ENCODE measurements at regions of chr6 and their contacts with region 1.

Region 1: DNA sequence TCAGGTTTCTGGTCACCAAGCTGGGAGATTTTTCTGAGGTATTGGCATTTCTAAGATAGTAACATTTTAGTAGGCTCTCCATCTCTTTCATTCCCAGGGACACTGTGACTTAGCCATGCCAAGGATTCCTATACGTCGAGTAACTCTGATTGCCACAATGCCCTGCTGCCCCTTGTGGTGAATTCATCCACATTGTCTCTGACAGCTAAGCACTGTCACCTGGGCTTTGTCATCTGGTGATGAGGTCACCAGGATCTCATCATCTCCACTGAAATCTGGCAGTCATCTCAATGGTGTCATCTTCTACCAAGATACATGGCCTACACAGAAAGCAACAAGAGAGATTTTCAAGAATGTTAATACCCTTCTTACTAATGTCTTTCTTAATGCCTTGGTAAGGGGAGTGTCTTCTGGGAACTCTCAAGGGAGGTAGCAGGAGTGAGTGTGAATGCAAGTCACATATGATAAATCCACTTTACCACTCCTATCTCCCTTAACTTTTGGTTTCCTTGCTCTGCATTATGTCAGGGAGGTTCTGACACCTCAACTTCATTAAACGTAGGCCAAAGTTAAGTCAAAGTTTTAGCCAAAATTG is 246.7 kb downstream of the CD109 start:
- DNase-seq: peak; percentile 59
- ATAC-seq: peak; percentile 100
- H3K4me3 ChIP-seq: no peak overlapping the region
- H3K27ac ChIP-seq: no peak overlapping the region
- H3K4me1 ChIP-seq: peaks cover 0 to 8% of the 10 kb centered on the region in 2 experiments; a peak in 1 of 4 replicates
- H3K27me3 ChIP-seq: no peaks in the 10 kb centered on the region
- CTCF ChIP-seq: peak; percentile 12 to 66 (median 61); a peak in 4 of 6 replicates
- POLR2A ChIP-seq: no peak
- RAD21 ChIP-seq: peak; percentile 45

Region 2: DNA sequence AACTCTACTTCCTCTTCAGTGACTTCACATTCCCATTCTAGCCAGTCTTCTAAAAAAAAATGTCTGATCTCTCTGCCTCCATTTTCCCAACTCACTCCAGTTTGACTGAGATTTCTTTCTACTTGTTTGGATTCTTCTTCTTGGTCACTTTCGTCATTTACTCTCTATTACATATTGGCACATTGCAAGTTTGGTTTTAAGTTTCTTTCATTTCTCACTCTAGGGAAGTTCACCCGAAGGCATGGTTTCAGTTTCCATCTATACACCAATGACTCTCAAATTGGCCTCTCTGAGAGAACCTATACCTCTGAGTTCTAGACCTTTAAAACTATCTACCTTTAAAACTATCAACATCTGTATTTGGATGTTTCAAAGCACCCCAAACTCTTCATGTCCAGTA is 195.4 kb before region 1 on chr6:
- CTCF ChIA-PET with region 1: no interaction called
- POLR2A ChIA-PET with region 1: no interaction called
- RAD21 ChIA-PET with region 1: no interaction called
- intact Hi-C with region 1: loop called (anchors 10 kb)
- DNase-seq: no peak
- ATAC-seq: no peak
- H3K4me3 ChIP-seq: no peak overlapping the region
- H3K27ac ChIP-seq: no peak overlapping the region
- H3K4me1 ChIP-seq: peaks cover 6 to 24% of the 10 kb centered on the region in 2 experiments
- H3K27me3 ChIP-seq: no peaks in the 10 kb centered on the region
- CTCF ChIP-seq: no peak
- POLR2A ChIP-seq: no peak
- RAD21 ChIP-seq: no peak